B cell (primary cell): ENCODE measurements at regions of chrX and their contacts with region 1.

Region 1: DNA sequence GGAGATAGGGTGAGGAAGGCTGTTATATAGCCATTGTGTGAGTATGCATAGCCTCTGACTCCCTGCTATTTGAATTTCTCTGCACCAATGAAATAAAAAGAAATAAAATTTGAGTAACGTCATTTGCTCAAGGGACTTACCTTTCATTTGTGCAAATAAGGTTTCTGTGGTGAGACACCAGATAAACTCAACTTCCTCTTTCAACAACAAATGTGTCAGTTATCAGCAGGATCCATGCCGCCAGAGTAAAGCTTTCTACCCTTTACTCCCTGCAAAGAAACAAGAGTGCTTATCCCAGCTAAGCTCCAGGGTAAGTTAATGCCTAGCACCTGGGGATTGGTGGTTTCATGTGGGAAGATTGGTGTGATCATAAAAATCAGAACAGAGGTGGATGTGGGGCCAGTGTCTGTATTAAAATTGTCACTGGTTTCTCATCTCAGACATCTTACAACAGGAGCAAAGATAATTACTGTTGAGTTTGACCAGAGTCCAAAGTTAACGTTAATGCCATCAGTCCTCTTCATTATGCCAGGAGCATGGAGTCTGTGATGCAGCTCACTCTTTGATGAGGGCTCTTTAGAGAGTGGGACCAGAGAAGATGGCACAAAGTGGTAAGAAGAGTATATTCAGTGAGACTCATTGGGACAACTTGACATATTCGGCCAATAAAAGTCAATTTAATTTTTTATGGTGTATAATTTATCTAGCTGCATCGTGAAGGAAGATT is at the start of gene P2RY10:
- DNase-seq: peak; percentile 78
- ATAC-seq: peak; percentile 80
- H3K4me3 ChIP-seq: peak within 1 kb of the TSS; percentile 69 to 98 (median 83)
- H3K4me3 Mint-ChIP-seq: peak within 1 kb of the TSS; percentile 99
- H3K27ac ChIP-seq: peak within 1 kb of the TSS; percentile 87 to 94
- H3K27ac Mint-ChIP-seq: peak within 1 kb of the TSS; percentile 97
- H3K4me1 ChIP-seq: peaks cover 37% of the 10 kb centered on the region in 2 donors
- H3K4me1 Mint-ChIP-seq: peaks cover 50% of the 10 kb centered on the region
- H3K27me3 ChIP-seq: no peaks in the 10 kb centered on the region
- H3K27me3 Mint-ChIP-seq: no peaks in the 10 kb centered on the region
- CTCF ChIP-seq: no peak
- total RNA-seq, gene P2RY10: 169 and 177 TPM in 2 replicates

Region 2: DNA sequence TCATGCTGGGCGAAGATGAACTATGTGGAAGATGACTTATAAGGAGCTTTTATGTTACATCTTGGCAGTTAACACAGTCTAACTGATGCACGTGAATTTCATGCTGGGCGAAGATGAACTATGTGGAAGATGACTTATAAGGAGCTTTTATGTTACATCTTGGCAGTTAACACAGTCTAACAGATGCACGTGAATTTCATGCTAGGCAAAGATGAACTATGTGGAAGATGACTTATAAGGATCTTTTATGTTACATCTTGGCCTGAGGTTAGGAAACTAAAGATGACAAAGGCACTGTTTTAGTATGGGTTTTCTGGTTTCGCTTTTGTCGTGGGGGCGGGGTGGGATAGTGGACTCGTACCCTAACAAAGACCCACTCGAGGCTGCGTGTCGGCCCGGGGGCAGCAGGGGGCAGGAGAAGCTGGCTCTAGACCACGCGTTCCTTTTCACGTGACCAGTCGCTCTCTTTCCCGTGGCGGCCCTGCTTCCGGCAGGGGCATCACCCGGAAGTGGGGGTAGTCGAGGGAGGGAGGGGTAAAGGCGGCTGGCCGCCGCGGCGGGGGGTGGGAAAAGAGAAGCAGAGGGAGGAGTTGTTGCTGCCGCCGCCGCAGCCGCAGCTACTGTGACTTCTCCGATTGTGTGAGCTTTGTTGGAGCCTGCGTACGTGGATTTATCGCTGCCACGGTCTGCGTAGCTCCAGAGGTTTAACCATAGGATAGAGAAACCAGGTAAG is 1035.1 kb before region 1 on chrX and contains the start of gene ATP7A:
- CTCF ChIA-PET with region 1: no interaction called
- POLR2A ChIA-PET with region 1: no interaction called
- intact Hi-C with region 1: loop called (anchors 10 kb)
- DNase-seq: peak; percentile 92
- ATAC-seq: peak; percentile 98
- H3K4me3 ChIP-seq: peak within 1 kb of the TSS; percentile 69 to 87 (median 81)
- H3K4me3 Mint-ChIP-seq: peak within 1 kb of the TSS; percentile 100
- H3K27ac ChIP-seq: peak within 1 kb of the TSS; percentile 83 to 88
- H3K27ac Mint-ChIP-seq: peak within 1 kb of the TSS; percentile 99
- H3K4me1 ChIP-seq: peaks cover 6 to 18% of the 10 kb centered on the region in 2 donors
- H3K4me1 Mint-ChIP-seq: peaks cover 24% of the 10 kb centered on the region
- H3K27me3 ChIP-seq: no peaks in the 10 kb centered on the region
- H3K27me3 Mint-ChIP-seq: no peaks in the 10 kb centered on the region
- CTCF ChIP-seq: peak; percentile 56
- total RNA-seq, gene ATP7A: 12.4 and 14.8 TPM in 2 replicates

Region 3: DNA sequence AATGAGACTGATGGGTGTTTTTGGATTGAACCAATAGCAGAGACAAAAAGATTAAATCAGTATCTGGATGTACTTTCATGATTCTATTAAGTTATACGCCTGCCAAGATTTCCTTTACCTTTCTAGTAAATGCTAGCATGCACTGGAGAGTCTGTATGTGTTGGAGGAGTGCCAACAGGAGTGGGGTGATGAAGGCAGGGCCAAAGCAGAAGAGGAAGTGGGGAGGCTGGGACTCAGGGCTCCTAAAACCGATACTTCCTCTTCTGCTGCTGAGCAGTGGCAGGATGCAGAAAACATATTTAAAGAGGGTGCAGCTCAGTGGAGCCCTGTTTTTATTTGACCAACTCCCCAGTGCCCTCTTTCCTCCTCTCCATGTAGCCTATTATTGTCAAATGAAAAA is 623.5 kb before region 1 on chrX:
- CTCF ChIA-PET with region 1: no interaction called
- POLR2A ChIA-PET with region 1: no interaction called
- intact Hi-C with region 1: loop called (anchors 10 kb)
- DNase-seq: peak; percentile 81
- ATAC-seq: peak; percentile 97
- H3K4me3 ChIP-seq: peak overlapping the region in 1 of 5 experiments; percentile 38
- H3K4me3 Mint-ChIP-seq: peak overlapping the region; percentile 73
- H3K27ac ChIP-seq: peak overlapping the region in 1 of 2 donors; percentile 74
- H3K27ac Mint-ChIP-seq: peak overlapping the region; percentile 77
- H3K4me1 ChIP-seq: peaks cover 41 to 45% of the 10 kb centered on the region in 2 donors
- H3K4me1 Mint-ChIP-seq: peaks cover 55% of the 10 kb centered on the region
- H3K27me3 ChIP-seq: no peaks in the 10 kb centered on the region
- H3K27me3 Mint-ChIP-seq: no peaks in the 10 kb centered on the region
- CTCF ChIP-seq: no peak

Region 4: DNA sequence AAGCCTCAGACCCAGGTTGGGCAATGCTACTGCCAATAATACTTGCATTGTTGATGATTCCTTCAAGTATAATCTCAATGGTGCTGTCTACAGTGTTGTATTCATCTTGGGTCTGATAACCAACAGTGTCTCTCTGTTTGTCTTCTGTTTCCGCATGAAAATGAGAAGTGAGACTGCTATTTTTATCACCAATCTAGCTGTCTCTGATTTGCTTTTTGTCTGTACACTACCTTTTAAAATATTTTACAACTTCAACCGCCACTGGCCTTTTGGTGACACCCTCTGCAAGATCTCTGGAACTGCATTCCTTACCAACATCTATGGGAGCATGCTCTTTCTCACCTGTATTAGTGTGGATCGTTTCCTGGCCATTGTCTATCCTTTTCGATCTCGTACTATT is 190.4 kb before region 1 on chrX:
- CTCF ChIA-PET with region 1: no interaction called
- POLR2A ChIA-PET with region 1: no interaction called
- intact Hi-C with region 1: loop called (anchors 2 kb)
- DNase-seq: peak; percentile 61
- ATAC-seq: peak; percentile 95
- H3K4me3 ChIP-seq: peak overlapping the region; percentile 34 to 53 (median 40)
- H3K4me3 Mint-ChIP-seq: peak overlapping the region; percentile 80
- H3K27ac ChIP-seq: peak overlapping the region; percentile 62 to 70
- H3K27ac Mint-ChIP-seq: peak overlapping the region; percentile 92
- H3K4me1 ChIP-seq: peaks cover 38 to 42% of the 10 kb centered on the region in 2 donors
- H3K4me1 Mint-ChIP-seq: peaks cover 40% of the 10 kb centered on the region
- H3K27me3 ChIP-seq: no peaks in the 10 kb centered on the region
- H3K27me3 Mint-ChIP-seq: no peaks in the 10 kb centered on the region
- CTCF ChIP-seq: no peak

Region 5: DNA sequence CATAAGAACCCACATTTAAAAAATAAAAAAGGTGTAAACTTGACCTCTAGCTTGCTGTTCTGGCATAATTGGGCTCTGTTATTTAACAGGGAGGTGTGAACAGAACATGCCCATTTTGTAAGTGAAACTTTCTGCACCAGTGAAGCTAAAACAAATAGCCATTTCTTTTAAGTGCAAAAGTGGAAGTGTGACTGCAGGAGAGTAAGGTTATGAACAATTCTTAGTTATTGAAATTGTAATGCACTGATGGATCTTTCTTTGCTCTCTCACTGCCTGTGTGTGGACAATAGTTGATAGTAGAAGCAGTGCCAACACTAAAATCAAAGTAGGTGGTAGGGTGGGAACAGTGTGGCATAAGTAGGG is 12.4 kb after region 1 on chrX:
- CTCF ChIA-PET with region 1: interaction called, 4 read pairs
- POLR2A ChIA-PET with region 1: interaction called, 3 read pairs
- intact Hi-C with region 1: loop called (anchors 1 kb)
- DNase-seq: no peak
- ATAC-seq: peak; percentile 85
- H3K4me3 ChIP-seq: peak overlapping the region in 2 of 5 experiments; percentile 5 to 12
- H3K4me3 Mint-ChIP-seq: peak overlapping the region; percentile 85
- H3K27ac ChIP-seq: peak overlapping the region; percentile 43 to 75
- H3K27ac Mint-ChIP-seq: peak overlapping the region; percentile 90
- H3K4me1 ChIP-seq: peaks cover 60 to 64% of the 10 kb centered on the region in 2 donors
- H3K4me1 Mint-ChIP-seq: peaks cover 76% of the 10 kb centered on the region
- H3K27me3 ChIP-seq: no peaks in the 10 kb centered on the region
- H3K27me3 Mint-ChIP-seq: no peaks in the 10 kb centered on the region
- CTCF ChIP-seq: no peak

Region 6: GRCh38 chrX:79270401-79270800 is 325.1 kb after region 1 on chrX:
- CTCF ChIA-PET with region 1: interaction called, 5 read pairs
- POLR2A ChIA-PET with region 1: no interaction called
- intact Hi-C with region 1: loop called (anchors 5 kb)
- DNase-seq: peak; percentile 77
- ATAC-seq: peak; percentile 91
- H3K4me3 ChIP-seq: no peak overlapping the region
- H3K4me3 Mint-ChIP-seq: no peak overlapping the region
- H3K27ac ChIP-seq: peak overlapping the region; percentile 16 to 42
- H3K27ac Mint-ChIP-seq: peak overlapping the region; percentile 54
- H3K4me1 ChIP-seq: peaks cover 20 to 26% of the 10 kb centered on the region in 2 donors
- H3K4me1 Mint-ChIP-seq: peaks cover 44% of the 10 kb centered on the region
- H3K27me3 ChIP-seq: no peaks in the 10 kb centered on the region
- H3K27me3 Mint-ChIP-seq: no peaks in the 10 kb centered on the region
- CTCF ChIP-seq: peak; percentile 77